ENCODE measurements at regions of chr18 and their contacts with region 1.

Region 1: DNA sequence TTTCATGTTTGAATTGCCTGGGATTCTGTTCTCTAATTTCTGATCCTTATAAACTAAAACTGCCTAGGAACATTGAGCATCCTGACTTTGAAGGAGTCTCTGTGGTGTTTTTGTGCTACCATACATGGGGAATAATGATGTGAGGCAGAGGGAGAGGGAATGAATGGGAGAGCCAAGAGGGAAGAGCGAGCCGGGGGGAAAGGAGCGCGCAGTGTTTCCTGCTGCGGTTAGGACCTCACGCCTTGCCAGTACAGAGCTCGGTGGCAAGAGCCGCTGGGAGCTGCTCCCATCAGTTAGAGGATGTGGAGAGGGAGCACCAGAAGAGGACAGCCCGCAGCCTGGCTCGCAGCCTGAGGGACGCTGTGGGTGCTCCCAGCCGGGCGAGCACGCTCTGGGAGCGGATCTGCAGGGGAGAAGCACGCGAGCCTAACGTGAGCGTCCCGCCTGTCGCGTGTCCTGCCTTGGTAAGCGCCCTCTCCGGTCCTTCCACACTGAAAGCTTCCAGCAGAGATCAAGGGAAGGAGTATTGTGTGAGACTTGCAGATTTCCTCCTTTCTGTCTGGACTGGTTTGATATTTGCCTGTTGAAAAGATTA is 114.7 kb downstream of the FAM210A start:
- DNase-seq: peak; percentile 26
- H3K4me3 Mint-ChIP-seq: peak overlapping the region; percentile 78
- H3K27ac Mint-ChIP-seq: peak overlapping the region; percentile 92
- H3K4me1 Mint-ChIP-seq: peaks cover 87% of the 10 kb centered on the region
- H3K27me3 Mint-ChIP-seq: no peaks in the 10 kb centered on the region

Region 2: GRCh38 chr18:13289481-13290205 is 322.1 kb before region 1 on chr18:
- CTCF ChIA-PET with region 1: no interaction called
- POLR2A ChIA-PET with region 1: no interaction called
- intact Hi-C with region 1: loop called (anchors 5 kb)
- DNase-seq: no peak
- H3K4me3 Mint-ChIP-seq: no peak overlapping the region
- H3K27ac Mint-ChIP-seq: peak overlapping the region; percentile 82
- H3K4me1 Mint-ChIP-seq: peaks cover 47% of the 10 kb centered on the region
- H3K27me3 Mint-ChIP-seq: peaks cover 8% of the 10 kb centered on the region

Region 3: DNA sequence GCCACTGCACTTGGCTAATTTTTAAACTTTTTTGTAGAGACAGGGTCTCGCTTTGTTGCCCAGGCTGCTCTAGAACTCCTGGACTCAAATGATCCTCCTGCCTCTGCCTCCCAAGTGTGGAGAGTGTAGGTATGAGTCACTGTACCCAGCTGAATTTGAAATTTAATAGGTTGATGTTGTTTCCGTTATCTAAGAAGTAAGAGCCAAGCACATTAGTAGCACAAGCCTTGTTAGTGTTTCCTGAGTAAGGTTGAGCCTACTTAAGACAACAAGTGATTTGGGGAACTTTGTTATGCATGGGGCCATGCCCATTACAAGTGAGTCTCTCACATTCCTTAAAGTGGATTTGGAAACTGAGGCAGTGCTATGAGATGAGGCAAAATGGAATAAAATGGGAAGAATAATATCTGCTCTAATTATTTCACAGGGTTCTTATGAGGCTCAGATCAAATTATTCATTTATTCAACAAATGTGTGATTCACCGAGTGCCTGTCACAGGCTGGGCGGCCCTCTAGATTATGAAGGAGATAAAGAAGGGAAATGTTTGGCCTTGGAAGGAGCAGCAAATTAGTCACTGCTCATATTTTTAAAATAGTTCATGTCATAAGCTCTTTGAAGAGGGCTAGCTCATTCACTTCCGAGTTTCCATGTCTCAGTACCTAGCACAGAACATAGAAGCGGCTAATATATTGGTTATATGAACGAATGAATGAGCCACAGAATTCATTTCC is 175.9 kb before region 1 on chr18:
- CTCF ChIA-PET with region 1: no interaction called
- POLR2A ChIA-PET with region 1: interaction called, 3 read pairs
- intact Hi-C with region 1: loop called (anchors 2 kb)
- DNase-seq: peak; percentile 22
- H3K4me3 Mint-ChIP-seq: no peak overlapping the region
- H3K27ac Mint-ChIP-seq: no peak overlapping the region
- H3K4me1 Mint-ChIP-seq: peaks cover 58% of the 10 kb centered on the region
- H3K27me3 Mint-ChIP-seq: no peaks in the 10 kb centered on the region

Region 4: GRCh38 chr18:13558124-13558523 is 53.6 kb before region 1 on chr18:
- CTCF ChIA-PET with region 1: interaction called, 86 read pairs
- POLR2A ChIA-PET with region 1: interaction called, 30 read pairs
- intact Hi-C with region 1: loop called (anchors 1 kb)
- DNase-seq: peak; percentile 43
- H3K4me3 Mint-ChIP-seq: no peak overlapping the region
- H3K27ac Mint-ChIP-seq: no peak overlapping the region
- H3K4me1 Mint-ChIP-seq: peaks cover 38% of the 10 kb centered on the region
- H3K27me3 Mint-ChIP-seq: no peaks in the 10 kb centered on the region

Region 5: DNA sequence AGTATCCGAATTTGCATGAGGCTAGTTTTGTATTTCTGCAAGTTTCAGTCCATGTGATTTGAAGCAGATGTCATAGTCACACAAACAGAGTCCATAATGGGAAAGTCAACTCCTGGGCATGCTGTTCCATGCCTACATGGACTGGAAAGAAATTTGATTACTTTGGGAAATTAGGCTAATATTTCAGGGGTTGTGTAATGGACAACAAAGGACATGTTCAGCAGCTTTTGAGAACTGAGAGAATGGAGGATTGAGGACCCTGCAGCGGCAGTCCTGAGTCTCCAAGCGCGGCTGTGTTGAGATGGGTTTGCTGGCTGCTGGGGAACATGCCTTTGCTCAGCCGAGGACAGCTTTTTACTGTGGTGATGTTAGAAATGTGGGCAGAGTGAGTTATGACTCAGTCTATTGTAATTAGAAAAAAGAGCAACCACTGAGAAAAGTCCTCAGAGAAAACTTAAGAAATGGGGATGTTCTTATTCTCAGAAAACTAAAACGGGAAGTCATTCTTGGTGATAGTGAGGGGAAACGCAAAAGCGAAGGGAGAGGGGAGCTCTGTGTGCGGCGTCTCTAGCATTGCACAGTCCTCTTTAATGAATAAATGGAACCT is 34.5 kb before region 1 on chr18:
- CTCF ChIA-PET with region 1: interaction called, 6 read pairs
- POLR2A ChIA-PET with region 1: interaction called, 24 read pairs
- intact Hi-C with region 1: loop called (anchors 1 kb)
- DNase-seq: peak; percentile 70
- H3K4me3 Mint-ChIP-seq: peak overlapping the region; percentile 31
- H3K27ac Mint-ChIP-seq: peak overlapping the region; percentile 52
- H3K4me1 Mint-ChIP-seq: peaks cover 45% of the 10 kb centered on the region
- H3K27me3 Mint-ChIP-seq: no peaks in the 10 kb centered on the region

Region 6: GRCh38 chr18:13726232-13726971 is 114.7 kb after region 1 on chr18 and contains the starts of genes FAM210A and RNMT:
- CTCF ChIA-PET with region 1: no interaction called
- POLR2A ChIA-PET with region 1: interaction called, 7 read pairs
- intact Hi-C with region 1: loop called (anchors 2 kb)
- DNase-seq: peak; percentile 96
- H3K4me3 Mint-ChIP-seq: peak within 1 kb of the TSS; percentile 83
- H3K27ac Mint-ChIP-seq: peak within 1 kb of the TSS; percentile 89
- H3K4me1 Mint-ChIP-seq: peaks cover 61% of the 10 kb centered on the region
- H3K27me3 Mint-ChIP-seq: no peaks in the 10 kb centered on the region
- total RNA-seq, gene FAM210A: 24.9 to 29.4 TPM
- total RNA-seq, gene RNMT: 41.2 to 43.6 TPM

Region 7: GRCh38 chr18:13756261-13756660 is 144.6 kb after region 1 on chr18:
- CTCF ChIA-PET with region 1: no interaction called
- POLR2A ChIA-PET with region 1: no interaction called
- intact Hi-C with region 1: no loop called
- DNase-seq: no peak
- H3K4me3 Mint-ChIP-seq: no peak overlapping the region
- H3K27ac Mint-ChIP-seq: no peak overlapping the region
- H3K4me1 Mint-ChIP-seq: peaks cover 4% of the 10 kb centered on the region
- H3K27me3 Mint-ChIP-seq: no peaks in the 10 kb centered on the region

Measured in activated CD4-positive, alpha-beta memory T cell treated with anti-CD3 and anti-CD28 coated beads for 36 hours (primary cell).